ENCODE measurements at regions of chr17 and their contacts with region 1.

Region 1: DNA sequence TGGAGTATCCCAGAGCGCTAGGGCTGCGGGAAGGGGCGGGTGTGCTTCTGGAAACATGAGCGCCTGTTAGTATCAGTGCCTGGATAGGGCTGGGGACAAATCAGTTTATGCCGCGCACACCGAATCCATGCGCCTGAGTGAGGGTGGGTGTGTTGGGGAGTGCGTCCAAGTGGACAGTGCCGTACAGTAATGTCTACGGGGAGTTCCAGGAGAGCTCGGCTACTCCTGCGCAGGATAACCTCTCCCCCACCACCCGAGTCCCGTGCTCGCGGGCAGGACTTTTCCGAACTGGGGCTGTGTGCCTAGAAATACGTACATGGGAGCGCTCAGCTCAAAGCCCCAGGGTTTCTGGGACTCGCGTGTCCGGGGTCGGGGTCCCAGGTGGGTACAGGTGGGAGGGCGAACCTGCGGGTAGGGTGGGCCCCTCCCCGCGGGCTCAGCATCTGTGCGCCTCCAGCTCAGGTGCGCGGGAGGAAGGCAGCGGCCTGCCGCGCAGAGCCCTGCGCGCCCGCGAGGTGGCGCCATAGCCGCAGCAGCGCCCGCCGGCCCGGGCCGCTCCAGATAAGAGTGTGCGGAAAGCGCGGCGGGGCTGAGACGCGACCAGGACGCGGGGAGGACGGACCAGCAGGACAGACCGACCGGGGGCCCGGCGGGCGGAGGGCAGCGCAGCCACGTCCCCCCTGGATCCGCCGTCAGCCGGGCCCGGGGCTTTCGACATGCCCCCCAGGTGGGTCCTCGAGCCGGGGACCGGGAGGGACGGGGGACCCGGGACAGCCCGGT is at the start of gene HIC1:
- DNase-seq: peak; percentile 83 to 92
- ATAC-seq: peak; percentile 48 to 82
- H3K4me3 ChIP-seq: peak within 1 kb of the TSS; percentile 50
- H3K27ac ChIP-seq: peak within 1 kb of the TSS; percentile 39 to 82; a peak in 5 of 6 replicates
- H3K4me1 ChIP-seq: 0 out of 3 replicates have a peak, but pooled peaks cover 5% of the 10 kb centered on the region
- CTCF ChIP-seq: peak; percentile 98
- EP300 ChIP-seq: no peak
- POLR2A ChIP-seq: no peak
- RAD21 ChIP-seq: peak; percentile 71 to 94
- polyA plus RNA-seq, gene HIC1: 0.13 and 0.28 TPM in 2 replicates

Region 2: GRCh38 chr17:1590031-1590748 is 464.5 kb before region 1 on chr17:
- CTCF ChIA-PET with region 1: no interaction called
- POLR2A ChIA-PET with region 1: no interaction called
- DNase-seq: peak; percentile 90 to 99
- ATAC-seq: peak; percentile 88 to 93
- H3K4me3 ChIP-seq: peak overlapping the region; percentile 22; the same call in 1 of the 3 replicates
- H3K27ac ChIP-seq: peak overlapping the region; percentile 76 to 84
- H3K4me1 ChIP-seq: peaks cover 42% of the 10 kb centered on the region
- CTCF ChIP-seq: no peak
- EP300 ChIP-seq: no peak
- POLR2A ChIP-seq: no peak
- RAD21 ChIP-seq: no peak; a peak in 2 of 5 replicates

Region 3: DNA sequence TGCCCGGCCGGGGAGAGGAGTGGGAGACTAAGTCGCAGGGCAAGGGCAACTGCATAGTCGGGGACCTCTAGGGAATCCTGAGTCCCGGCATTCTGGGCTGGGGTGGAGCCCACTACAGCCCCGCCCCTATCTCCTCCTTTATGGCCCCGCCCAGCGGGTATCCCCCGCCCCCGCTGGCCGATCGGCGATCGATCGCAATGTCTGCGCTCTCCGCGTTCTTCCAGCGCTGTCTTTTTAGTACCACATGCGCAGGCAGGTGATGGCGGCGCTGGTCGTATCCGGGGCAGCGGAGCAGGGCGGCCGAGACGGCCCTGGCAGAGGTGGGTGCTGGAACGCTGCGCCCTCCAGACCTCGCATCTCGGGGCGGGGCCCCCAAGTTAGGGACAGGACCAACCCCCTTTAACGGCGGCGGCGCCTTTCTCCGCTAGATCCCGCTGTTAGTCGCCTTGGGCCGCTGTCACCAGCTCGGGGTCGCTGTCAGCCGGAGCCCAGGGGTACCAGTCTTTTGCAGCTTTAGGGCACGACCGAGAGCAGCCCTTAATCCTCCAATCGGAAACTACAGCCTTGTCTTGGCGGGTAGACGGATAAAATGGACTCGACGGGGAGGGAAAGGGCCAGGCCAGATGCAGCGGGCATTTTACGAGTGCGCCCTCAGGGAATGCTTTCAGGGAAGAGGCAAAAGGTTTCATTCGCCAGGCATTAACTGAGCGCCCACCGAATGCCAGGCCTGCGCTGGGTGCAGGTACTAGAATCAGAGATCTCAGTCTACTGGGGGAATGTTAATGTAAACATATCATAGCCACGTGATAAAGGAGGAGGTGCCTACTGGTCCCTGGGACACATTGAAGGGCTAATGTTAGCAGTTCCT is 24.6 kb before region 1 on chr17 and contains the start of gene DPH1:
- CTCF ChIA-PET with region 1: interaction called, 224 read pairs
- POLR2A ChIA-PET with region 1: no interaction called
- DNase-seq: peak; percentile 91 to 99
- ATAC-seq: peak; percentile 83 to 93
- H3K4me3 ChIP-seq: peak within 1 kb of the TSS; percentile 80
- H3K27ac ChIP-seq: peak within 1 kb of the TSS; percentile 71 to 90
- H3K4me1 ChIP-seq: peaks cover 19% of the 10 kb centered on the region
- CTCF ChIP-seq: no peak
- EP300 ChIP-seq: no peak
- POLR2A ChIP-seq: peak; percentile 64
- RAD21 ChIP-seq: peak in 1 of 2 experiments; percentile 9; a peak in 3 of 5 replicates
- polyA plus RNA-seq, gene DPH1: 25.5 and 33.0 TPM in 2 replicates

Region 4: GRCh38 chr17:2087597-2088211 is 33.0 kb after region 1 on chr17:
- CTCF ChIA-PET with region 1: interaction called, 33 read pairs
- POLR2A ChIA-PET with region 1: no interaction called
- DNase-seq: no peak
- ATAC-seq: no peak
- H3K4me3 ChIP-seq: no peak overlapping the region
- H3K27ac ChIP-seq: no peak overlapping the region
- H3K4me1 ChIP-seq: peaks cover 27% of the 10 kb centered on the region
- CTCF ChIP-seq: no peak
- EP300 ChIP-seq: no peak
- POLR2A ChIP-seq: no peak
- RAD21 ChIP-seq: no peak

Region 5: DNA sequence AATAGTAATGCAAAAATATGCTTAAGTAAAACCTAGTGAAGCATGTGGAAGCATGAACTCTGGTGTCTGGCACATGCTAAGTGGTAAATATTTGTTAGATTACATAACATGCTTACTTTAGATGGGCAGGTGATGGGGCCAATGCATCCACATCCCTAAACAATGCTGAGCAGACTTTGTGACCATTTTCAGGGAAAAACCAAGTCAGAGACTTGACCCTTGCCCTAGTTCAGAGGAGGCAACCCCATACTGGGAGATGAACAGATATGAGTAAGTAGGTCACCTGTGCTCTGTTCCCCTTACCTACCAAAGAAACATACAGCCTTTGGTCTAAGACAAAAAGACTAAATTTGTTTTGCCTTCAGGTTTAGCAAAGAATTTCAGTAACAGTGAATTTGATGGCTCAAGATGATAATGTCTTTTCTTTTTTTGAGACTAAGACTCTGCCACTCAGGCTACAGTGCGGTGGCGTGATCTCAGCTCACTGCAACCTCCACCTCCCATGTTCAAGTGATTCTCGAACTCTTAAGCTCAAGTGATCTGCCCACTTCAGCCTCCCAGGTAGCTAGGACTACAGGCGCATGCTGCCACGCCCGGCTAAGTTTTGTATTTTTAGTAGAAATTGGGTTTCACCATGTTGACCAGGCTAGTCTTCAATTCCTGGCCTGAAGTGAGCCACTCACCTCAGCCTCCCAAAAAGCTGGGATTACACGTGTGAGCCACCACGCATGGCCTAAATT is 91.6 kb after region 1 on chr17:
- CTCF ChIA-PET with region 1: interaction called, 13 read pairs
- POLR2A ChIA-PET with region 1: no interaction called
- DNase-seq: no peak
- ATAC-seq: no peak
- H3K4me3 ChIP-seq: no peak overlapping the region
- H3K27ac ChIP-seq: no peak overlapping the region
- H3K4me1 ChIP-seq: peaks cover 4% of the 10 kb centered on the region; the same call in 1 of the 3 replicates
- CTCF ChIP-seq: no peak
- EP300 ChIP-seq: no peak
- POLR2A ChIP-seq: no peak
- RAD21 ChIP-seq: no peak

Region 6: GRCh38 chr17:2222901-2223616 is 168.4 kb after region 1 on chr17:
- CTCF ChIA-PET with region 1: interaction called, 117 read pairs
- POLR2A ChIA-PET with region 1: no interaction called
- DNase-seq: no peak
- ATAC-seq: no peak
- H3K4me3 ChIP-seq: no peak overlapping the region
- H3K27ac ChIP-seq: no peak overlapping the region
- H3K4me1 ChIP-seq: no peaks in the 10 kb centered on the region
- CTCF ChIP-seq: no peak
- EP300 ChIP-seq: no peak
- POLR2A ChIP-seq: no peak
- RAD21 ChIP-seq: no peak

Region 7: GRCh38 chr17:2266045-2266864 is 211.6 kb after region 1 on chr17:
- CTCF ChIA-PET with region 1: interaction called, 29 read pairs
- POLR2A ChIA-PET with region 1: no interaction called
- DNase-seq: no peak
- ATAC-seq: no peak
- H3K4me3 ChIP-seq: no peak overlapping the region
- H3K27ac ChIP-seq: no peak overlapping the region
- H3K4me1 ChIP-seq: peaks cover 22% of the 10 kb centered on the region
- CTCF ChIP-seq: no peak
- EP300 ChIP-seq: no peak
- POLR2A ChIP-seq: no peak
- RAD21 ChIP-seq: no peak

Region 8: GRCh38 chr17:2336215-2336851 is 281.6 kb after region 1 on chr17 and contains the start of gene TSR1:
- CTCF ChIA-PET with region 1: interaction called, 16 read pairs
- POLR2A ChIA-PET with region 1: interaction called, 4 read pairs
- DNase-seq: peak; percentile 94 to 99
- ATAC-seq: peak; percentile 92 to 97
- H3K4me3 ChIP-seq: peak within 1 kb of the TSS; percentile 99
- H3K27ac ChIP-seq: peak within 1 kb of the TSS; percentile 94 to 99
- H3K4me1 ChIP-seq: peaks cover 20% of the 10 kb centered on the region
- CTCF ChIP-seq: peak; percentile 38
- EP300 ChIP-seq: no peak
- POLR2A ChIP-seq: peak; percentile 83
- RAD21 ChIP-seq: peak in 1 of 2 experiments; percentile 19; a peak in 2 of 5 replicates
- polyA plus RNA-seq, gene TSR1: 38.3 and 45.7 TPM in 2 replicates